Cardiac septum (tissue), 1 donor: ENCODE measurements at regions of chr12 and their contacts with region 1.

Region 1: DNA sequence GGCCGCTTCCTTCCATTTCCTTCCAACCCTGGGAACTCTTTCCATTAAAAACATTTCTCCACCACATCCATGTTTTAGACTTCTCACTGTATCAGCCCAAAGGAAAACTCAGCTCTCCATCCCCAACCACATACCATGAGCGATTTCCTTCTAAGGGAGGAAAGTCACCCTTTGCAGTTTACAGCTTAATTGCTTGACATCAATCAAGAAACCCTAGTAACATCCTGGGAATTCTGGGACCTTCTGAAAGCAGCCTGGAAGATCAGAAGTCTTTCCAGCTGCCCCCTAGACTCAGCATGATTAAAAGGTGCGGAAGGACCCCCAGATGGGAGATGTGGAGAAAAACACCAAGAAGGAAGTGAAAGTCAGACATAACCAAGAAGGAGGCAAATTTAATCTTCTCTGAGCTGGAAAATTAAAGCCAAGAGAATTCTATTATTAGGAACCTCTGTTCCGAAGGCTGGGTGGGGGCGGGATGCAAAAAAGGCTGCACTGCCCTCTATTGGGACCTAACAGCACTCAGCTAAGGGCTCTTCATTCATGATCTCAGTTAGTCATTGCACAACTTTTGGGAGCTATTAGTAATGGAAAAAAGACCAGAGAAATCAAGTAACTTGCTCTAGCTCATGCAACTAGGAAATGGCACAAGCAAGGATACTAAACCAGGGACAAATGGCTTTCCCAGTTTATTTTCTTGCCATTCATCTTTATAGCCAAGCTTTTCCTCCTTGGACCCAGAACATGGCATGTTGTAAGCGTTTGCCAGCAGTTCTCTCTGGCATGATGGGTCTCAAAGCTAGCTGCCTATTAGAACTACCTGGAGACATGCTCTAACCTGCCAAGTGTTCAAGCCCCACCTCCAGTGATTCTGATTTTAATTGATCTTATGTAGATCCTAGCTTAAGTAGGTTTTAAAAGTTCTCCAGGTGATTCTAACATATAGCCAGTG is 73.1 kb upstream of the PLXNC1 start:
- DNase-seq: no peak

Region 2: GRCh38 chr12:93990832-93991803 is 84.1 kb before region 1 on chr12:
- intact Hi-C with region 1: loop called (anchors 2 kb)
- DNase-seq: no peak

Region 3: GRCh38 chr12:94100211-94100627 is 25.0 kb after region 1 on chr12:
- intact Hi-C with region 1: no loop called
- DNase-seq: no peak

Region 4: DNA sequence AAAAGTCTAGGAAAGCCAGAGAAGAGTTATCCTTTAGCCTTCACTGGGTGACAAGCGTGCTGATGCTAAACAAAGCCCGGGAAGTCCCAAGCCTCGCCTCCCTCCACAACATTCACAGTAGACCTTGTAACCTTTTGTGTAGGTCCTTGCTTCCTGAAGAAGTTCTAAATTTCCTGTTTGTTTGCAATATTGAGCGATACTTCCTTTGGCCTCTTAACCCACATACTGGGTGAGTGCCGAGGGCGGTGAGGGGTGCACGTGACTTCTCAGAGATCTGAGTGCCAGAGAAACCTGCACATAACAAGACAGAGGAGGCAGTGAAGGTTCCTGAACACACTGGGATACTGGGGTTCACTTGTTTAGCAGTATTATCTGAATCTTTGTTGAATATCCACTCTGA is 207.4 kb after region 1 on chr12:
- intact Hi-C with region 1: no loop called
- DNase-seq: no peak